ENCODE measurements at regions of chr6 and their contacts with region 1.

Region 1: DNA sequence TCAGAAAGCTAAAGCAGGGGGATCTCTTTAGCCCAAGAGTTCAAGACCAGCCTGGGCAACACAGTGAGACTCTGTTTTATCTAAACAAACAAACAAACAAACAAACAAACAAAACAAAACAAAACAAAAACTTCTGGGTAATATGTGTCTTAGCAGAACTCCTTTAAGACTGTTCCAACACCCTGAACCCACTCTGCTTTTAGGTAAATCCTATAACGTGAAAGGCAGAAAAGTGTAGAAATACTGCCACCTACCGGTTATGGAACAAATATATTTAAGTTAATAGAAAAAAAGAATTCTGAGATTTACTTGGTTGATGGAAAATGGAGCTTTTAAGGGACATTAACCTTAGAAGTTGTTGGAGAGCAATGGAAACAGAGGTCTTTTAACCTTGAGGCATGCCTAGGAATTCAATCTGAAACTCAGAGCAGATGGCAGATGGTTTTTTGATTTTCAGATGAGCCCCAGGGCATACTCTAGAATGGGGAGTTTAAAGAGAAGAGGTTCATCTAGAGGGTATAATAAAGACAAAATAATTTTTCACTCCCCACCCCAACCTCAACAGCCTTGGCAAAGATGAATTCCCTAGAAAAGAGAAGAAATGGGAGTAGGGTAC is 38.5 kb downstream of the SOD2 start:
- DNase-seq: peak; percentile 71
- H3K4me3 Mint-ChIP-seq: no peak overlapping the region
- H3K27ac Mint-ChIP-seq: no peak overlapping the region
- H3K4me1 Mint-ChIP-seq: peaks cover 5% of the 10 kb centered on the region
- H3K27me3 Mint-ChIP-seq: no peaks in the 10 kb centered on the region
- CTCF ChIP-seq: peak; percentile 54

Region 2: GRCh38 chr6:159633196-159633595 is 21.4 kb before region 1 on chr6:
- CTCF ChIA-PET with region 1: interaction called, 28 read pairs
- POLR2A ChIA-PET with region 1: no interaction called
- intact Hi-C with region 1: no loop called
- DNase-seq: peak; percentile 59
- H3K4me3 Mint-ChIP-seq: no peak overlapping the region
- H3K27ac Mint-ChIP-seq: no peak overlapping the region
- H3K4me1 Mint-ChIP-seq: no peaks in the 10 kb centered on the region
- H3K27me3 Mint-ChIP-seq: no peaks in the 10 kb centered on the region
- CTCF ChIP-seq: peak; percentile 34

Region 3: DNA sequence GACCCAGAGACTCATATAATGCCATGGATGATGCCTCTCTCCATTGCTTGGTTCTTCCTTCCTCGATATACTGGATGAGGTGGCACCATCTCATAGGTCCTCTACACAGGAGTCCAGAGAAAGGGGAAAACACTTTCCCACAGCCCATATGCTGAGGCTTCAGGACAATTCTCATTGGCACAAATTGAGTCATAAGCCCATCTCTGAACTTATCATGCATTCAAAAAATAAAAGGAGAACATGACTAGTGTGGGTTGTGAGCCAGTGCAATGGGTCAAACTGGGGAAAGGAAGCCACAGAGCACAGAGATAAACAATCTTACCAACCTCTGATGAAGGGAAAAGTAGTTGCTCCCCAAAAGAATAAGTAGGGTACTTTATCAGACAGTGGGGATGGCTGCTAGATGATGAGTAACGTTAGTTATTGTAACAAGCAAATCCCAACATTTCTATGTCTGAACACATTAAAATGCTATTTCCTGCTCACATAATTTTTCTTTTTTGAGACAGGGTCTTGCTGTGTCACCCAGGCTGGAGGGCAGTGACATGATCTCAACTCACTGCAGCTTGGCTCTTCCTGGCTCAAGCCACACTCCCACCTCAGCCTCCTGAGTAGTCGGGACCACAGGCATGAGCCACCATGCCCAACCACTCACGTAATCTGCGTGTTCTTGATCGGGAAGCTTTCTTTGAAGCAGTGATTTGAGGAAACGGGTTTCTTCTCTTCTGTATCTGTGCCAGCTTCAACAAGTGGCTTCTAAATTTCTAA is 11.5 kb after region 1 on chr6:
- CTCF ChIA-PET with region 1: interaction called, 24 read pairs
- POLR2A ChIA-PET with region 1: interaction called, 4 read pairs
- intact Hi-C with region 1: no loop called
- DNase-seq: no peak
- H3K4me3 Mint-ChIP-seq: no peak overlapping the region
- H3K27ac Mint-ChIP-seq: no peak overlapping the region
- H3K4me1 Mint-ChIP-seq: no peaks in the 10 kb centered on the region
- H3K27me3 Mint-ChIP-seq: no peaks in the 10 kb centered on the region
- CTCF ChIP-seq: no peak

Measured in MCF 10A (cell line).